Posterior cingulate gyrus (tissue), 11 donors: ENCODE measurements at regions of chr18 and their contacts with region 1.

Region 1: DNA sequence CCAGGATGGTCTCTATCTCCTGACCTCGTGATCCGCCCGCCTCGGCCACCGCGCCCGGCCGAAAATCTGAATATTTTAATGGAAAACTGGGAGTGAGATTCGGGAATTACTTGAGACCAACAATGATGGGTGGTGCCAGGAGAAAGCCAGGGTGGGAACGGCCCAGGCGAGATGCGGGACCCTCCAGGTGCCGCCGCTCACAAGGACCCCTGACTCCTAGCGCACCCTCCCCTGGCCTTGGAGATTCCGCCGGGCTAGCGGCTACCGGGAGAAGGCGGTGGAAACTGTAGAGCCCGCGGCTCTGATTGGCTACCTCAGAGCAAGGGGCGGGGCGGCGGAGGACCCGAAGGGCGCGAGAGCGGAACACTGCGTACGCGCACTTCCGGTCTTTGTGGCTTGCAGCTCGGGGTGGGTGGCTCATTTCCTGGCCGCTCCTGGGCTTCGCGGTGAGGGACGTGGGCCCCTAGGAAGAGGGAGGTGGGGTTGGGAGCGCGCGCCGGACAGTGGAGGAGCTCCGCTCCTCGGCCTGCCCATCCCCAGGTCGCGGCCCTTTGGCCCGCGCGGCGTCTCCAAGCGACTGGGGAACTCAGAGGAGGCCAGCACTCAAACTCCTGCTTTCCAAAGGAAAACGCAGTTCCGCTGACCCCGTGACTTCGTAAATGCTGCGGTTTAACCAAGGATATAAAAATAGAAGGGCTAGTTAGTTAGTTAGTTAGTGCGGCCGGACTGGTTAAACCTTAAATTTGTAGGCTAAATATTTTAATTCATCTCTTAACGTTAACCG is at the start of gene ZNF397:
- DNase-seq: peak; percentile 94 to 99 (median 98)

Region 2: DNA sequence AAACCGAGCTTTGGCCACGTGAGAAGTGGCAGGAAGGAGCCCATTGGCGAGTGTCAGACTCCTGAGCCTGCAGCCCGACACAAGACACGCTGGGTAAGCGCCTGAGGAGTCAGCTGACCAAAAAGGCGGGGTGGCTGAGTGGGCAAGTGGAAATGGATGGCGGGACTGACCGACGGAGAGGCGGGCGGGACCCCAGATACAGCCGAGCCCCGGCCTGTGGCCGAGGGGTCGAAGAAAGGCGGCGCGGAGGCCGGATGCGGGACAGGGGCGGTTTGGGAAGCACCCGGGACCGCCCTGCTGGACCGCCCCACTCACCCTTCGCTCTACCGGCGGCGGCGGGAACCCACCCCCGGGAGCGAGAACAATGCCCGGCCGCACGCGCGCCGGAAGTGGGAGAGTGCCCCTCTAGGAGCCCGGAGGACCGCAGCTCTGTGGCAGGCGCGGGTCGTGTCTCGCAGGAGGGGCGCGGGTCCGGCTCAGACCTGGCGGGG is 26.4 kb after region 1 on chr18:
- intact Hi-C with region 1: loop called (anchors 1 kb)
- DNase-seq: peak; percentile 61 to 96 (median 78)

Region 3: GRCh38 chr18:35290073-35290735 is 49.3 kb after region 1 on chr18 and contains the start of gene ZSCAN30:
- intact Hi-C with region 1: loop called (anchors 2 kb)
- DNase-seq: peak; percentile 92 to 99 (median 94)

Region 4: GRCh38 chr18:35355140-35355618 is 114.3 kb after region 1 on chr18:
- intact Hi-C with region 1: loop called (anchors 2 kb)
- DNase-seq: peak; percentile 56 to 97 (median 79)

Region 5: DNA sequence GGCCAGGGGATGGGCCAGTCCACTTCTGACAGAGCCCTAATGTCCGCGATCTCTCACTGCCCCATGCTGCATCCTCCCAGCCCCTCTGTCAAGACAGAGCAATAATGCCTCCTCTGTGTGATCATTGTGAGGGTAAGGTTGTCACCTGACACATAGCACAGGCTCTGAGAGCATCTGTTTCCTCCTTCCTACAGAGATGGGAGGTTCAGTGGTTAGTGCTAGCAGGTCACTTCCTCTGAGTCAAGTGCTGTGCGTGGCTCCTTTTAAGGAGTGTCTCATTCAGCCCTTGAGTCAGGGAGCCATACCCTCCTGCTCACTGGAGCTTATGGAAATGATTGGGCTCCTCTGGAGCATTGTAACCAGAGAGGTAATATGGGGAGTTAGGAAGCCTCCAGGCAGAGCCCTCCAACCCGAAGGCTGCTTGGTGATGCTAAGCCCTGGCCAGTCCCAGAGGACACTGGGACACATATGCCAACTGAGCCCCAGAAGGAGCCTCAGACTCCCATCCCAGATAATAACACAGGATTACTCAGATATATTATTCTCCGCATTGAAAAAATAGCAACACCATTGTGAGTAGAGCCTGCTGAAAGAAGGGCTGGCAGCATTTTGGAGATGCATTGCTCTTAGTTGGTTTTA is 529.6 kb after region 1 on chr18:
- intact Hi-C with region 1: no loop called
- DNase-seq: peak in 1 of 10 donors; percentile 33